ENCODE measurements at regions of chr1 and their contacts with region 1.

Region 1: GRCh38 chr1:172089768-172090510 is 248.6 kb downstream of the DNM3 start:
- DNase-seq: peak; percentile 83
- ATAC-seq: peak; percentile 93
- H3K4me3 Mint-ChIP-seq: no peak overlapping the region
- H3K27ac Mint-ChIP-seq: no peak overlapping the region
- H3K4me1 Mint-ChIP-seq: peaks cover 2% of the 10 kb centered on the region
- H3K27me3 Mint-ChIP-seq: no peaks in the 10 kb centered on the region

Region 2: GRCh38 chr1:172269644-172270043 is 179.7 kb after region 1 on chr1:
- CTCF ChIA-PET with region 1: no interaction called
- POLR2A ChIA-PET with region 1: no interaction called
- intact Hi-C with region 1: loop called in 1 of 2 experiments (anchors 5 kb)
- DNase-seq: peak; percentile 18
- ATAC-seq: peak; percentile 10
- H3K4me3 Mint-ChIP-seq: no peak overlapping the region
- H3K27ac Mint-ChIP-seq: peak overlapping the region; percentile 39
- H3K4me1 Mint-ChIP-seq: peaks cover 41% of the 10 kb centered on the region
- H3K27me3 Mint-ChIP-seq: no peaks in the 10 kb centered on the region

Region 3: GRCh38 chr1:172429331-172430127 is 339.6 kb after region 1 on chr1:
- CTCF ChIA-PET with region 1: interaction called, 4 read pairs
- POLR2A ChIA-PET with region 1: no interaction called
- intact Hi-C with region 1: loop called in 1 of 2 experiments (anchors 1 kb)
- DNase-seq: peak; percentile 66
- ATAC-seq: peak; percentile 71
- H3K4me3 Mint-ChIP-seq: no peak overlapping the region
- H3K27ac Mint-ChIP-seq: no peak overlapping the region
- H3K4me1 Mint-ChIP-seq: peaks cover 30% of the 10 kb centered on the region
- H3K27me3 Mint-ChIP-seq: no peaks in the 10 kb centered on the region